ENCODE measurements at regions of chr1 and their contacts with region 1.

Region 1: DNA sequence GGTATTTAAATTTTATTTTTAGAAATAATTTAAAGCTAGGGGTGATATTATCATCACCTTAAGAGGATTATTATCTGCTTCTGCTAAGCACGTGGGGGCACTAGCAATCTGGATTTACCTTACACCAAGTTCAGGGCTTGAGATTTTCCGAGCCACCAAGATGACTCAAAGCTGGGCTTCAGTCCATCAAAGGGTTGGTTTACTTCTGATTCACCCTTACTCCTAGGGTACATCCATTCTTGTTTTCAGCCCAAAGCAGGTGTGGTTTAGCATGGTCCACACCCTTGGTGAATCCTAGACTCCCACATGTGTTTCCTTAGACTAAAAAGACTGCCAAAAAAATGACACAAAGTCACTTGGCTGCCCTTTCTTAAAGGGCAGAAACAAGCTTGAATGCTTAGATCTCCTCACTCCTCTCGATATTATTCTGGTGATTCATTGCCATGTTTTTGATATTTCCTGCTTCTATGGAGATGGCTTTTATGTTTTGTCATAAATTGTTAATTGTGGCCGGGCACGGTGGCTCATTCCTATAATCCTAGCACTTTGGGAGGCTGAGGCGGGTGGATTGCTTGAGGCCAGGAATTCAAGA is 9.8 kb upstream of the PRSS38 start:
- DNase-seq: no peak
- H3K4me3 Mint-ChIP-seq: no peak overlapping the region
- H3K27ac Mint-ChIP-seq: no peak overlapping the region
- H3K4me1 Mint-ChIP-seq: peaks cover 9% of the 10 kb centered on the region
- H3K27me3 Mint-ChIP-seq: peaks cover 2% of the 10 kb centered on the region

Region 2: DNA sequence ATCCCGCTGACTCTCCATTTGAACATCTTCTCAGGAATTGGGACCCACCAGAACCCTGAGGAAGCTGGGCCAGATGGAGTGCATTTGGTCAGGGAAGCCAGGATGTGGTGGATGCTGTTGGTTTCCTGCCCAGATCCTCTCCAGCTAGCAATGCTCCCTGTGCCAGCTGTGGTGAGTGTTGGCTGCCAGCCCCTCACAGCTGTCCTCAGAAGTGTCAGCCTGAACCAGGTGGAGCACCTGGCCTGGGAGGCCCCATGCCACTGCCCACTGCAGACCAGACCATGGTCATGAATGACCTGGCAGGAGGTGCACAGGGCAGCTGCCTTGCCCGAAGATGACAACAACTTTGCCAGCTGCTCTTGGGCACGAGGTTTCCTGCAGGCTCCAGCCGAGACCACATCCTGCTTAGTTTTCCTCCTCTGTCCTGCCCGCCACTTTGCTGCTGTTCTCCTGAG is 64.2 kb after region 1 on chr1:
- CTCF ChIA-PET with region 1: no interaction called
- intact Hi-C with region 1: loop called (anchors 5 kb)
- DNase-seq: peak; percentile 52
- H3K4me3 Mint-ChIP-seq: no peak overlapping the region
- H3K27ac Mint-ChIP-seq: no peak overlapping the region
- H3K4me1 Mint-ChIP-seq: peaks cover 29% of the 10 kb centered on the region
- H3K27me3 Mint-ChIP-seq: no peaks in the 10 kb centered on the region